Heart right ventricle (tissue), 16 donors: ENCODE measurements at regions of chr16 and their contacts with region 1.

Region 1: DNA sequence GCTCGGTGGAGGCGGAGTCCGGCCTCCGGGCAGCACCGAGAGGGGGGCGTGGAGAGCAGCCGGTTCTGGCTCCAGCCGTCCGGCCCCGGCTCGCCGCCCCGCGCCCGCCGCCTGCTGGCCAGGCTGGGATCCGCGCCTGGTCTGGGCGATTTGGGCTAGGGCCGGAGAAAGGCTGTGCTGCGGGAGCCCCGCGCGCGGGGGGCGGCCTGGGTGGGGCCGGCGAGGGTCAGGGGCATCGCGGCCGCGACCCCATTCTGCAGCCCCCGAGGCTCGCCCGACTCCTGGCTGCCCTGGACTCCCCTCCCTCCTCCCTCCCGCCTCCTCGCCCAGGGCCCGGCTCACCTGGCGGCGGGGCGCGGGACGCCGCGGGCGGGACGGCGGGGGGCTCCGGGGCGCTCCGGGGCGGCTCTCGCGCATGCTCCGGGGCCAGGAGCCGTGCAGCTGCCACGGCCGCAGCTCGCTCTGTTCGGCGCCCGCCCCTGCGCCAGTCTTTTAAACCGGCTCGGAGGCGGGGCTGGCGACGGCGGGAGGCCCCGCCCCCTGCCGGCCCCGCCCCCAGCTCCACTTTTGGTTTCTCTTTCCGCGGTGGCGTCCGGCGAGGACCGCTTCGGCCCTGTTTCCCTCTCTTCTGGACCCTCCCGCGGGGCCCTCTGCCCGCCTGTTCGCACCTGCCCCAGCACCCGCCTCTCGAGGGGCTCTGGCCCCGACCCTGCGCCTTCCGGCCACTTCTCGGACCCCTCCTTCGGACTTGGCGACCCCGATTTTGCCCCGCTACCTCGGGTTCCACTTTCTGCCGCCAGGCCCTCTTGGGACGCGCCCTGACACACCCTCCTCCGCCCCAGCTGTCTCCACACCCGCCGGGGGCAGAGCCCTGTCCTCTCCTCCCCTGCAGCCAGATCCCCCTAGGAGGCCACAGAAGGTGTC is at the start of gene SOCS1:
- DNase-seq: peak; percentile 84 to 88
- ATAC-seq: peak; percentile 77 to 90 (median 84)
- H3K4me3 ChIP-seq: peak within 1 kb of the TSS; percentile 42 to 93 (median 82)
- H3K27ac ChIP-seq: peak within 1 kb of the TSS; percentile 92 to 100 (median 98)
- H3K4me1 ChIP-seq: peaks cover 15 to 66% (median 34%) of the 10 kb centered on the region in 9 donors
- H3K27me3 ChIP-seq: no peaks in the 10 kb centered on the region
- CTCF ChIP-seq: peak in 8 of 9 donors; percentile 68 to 96 (median 92)
- total RNA-seq, gene SOCS1: 0.60 to 12.2 (median 2.1) TPM

Region 2: DNA sequence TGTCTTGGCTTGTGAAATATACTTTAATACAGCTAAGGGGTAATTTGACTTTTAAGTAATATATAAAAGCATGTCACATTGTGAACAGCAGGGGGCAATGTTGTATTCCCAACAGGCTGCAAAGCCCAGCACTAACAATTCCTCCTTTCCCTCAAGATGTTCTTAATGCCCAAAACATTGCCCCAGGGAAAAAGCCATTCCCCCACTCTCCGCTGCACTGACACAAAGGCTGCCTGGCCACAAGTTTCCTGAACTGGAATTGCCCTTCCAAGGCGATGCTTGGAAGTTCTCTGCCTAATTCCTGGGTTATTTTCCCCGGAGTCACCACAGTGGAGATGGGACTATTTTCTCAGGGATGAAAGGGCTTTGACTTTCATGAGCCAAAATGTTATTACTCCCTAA is 284.4 kb before region 1 on chr16:
- intact Hi-C with region 1: loop called in 9 of 10 experiments (anchors 1 to 5 kb)
- DNase-seq: peak in 1 of 2 donors; percentile 70
- ATAC-seq: peak; percentile 34 to 72 (median 66)
- H3K4me3 ChIP-seq: no peak overlapping the region
- H3K27ac ChIP-seq: no peak overlapping the region
- H3K4me1 ChIP-seq: peaks cover 0 to 31% (median 15%) of the 10 kb centered on the region in 9 donors
- H3K27me3 ChIP-seq: no peaks in the 10 kb centered on the region
- CTCF ChIP-seq: peak; percentile 72 to 87 (median 81)

Region 3: GRCh38 chr16:11105038-11105903 is 150.7 kb before region 1 on chr16:
- intact Hi-C with region 1: loop called in 8 of 10 experiments (anchors 2 to 10 kb)
- DNase-seq: no peak
- ATAC-seq: peak; percentile 19 to 82 (median 42)
- H3K4me3 ChIP-seq: no peak overlapping the region
- H3K27ac ChIP-seq: peak overlapping the region in 5 of 10 donors; percentile 0 to 78 (median 30)
- H3K4me1 ChIP-seq: peaks cover 0 to 64% (median 52%) of the 10 kb centered on the region in 9 donors
- H3K27me3 ChIP-seq: no peaks in the 10 kb centered on the region
- CTCF ChIP-seq: no peak

Region 4: DNA sequence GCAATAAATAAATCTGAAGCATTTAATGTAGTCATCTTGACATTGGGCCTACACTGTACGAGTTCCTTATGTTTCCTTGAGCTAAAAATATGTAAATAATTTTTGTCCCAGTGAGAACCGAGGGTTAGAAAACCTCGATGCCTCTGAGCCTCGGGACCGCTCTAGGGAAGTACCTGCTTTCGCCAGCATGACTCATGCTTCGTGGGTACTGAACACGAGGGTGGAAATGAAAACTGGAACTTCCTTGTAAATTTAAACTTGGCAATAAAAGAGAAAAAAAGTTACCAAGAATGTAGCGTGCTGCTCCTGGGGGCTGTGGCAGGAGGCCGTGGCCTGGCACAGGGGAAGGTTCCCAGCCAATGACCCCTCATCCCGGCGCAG is 74.1 kb before region 1 on chr16:
- intact Hi-C with region 1: no loop called
- DNase-seq: no peak
- ATAC-seq: peak in 1 of 8 donors; percentile 20
- H3K4me3 ChIP-seq: no peak overlapping the region
- H3K27ac ChIP-seq: peak overlapping the region in 1 of 10 donors; percentile 65
- H3K4me1 ChIP-seq: peaks cover 0 to 44% (median 0%) of the 10 kb centered on the region in 9 donors
- H3K27me3 ChIP-seq: no peaks in the 10 kb centered on the region
- CTCF ChIP-seq: no peak

Region 5: GRCh38 chr16:11349599-11350276 is 93.7 kb after region 1 on chr16:
- intact Hi-C with region 1: loop called in 2 of 10 experiments (anchors 2 to 10 kb)
- DNase-seq: peak; percentile 54 to 56
- ATAC-seq: peak in 7 of 8 donors; percentile 37 to 78 (median 59)
- H3K4me3 ChIP-seq: no peak overlapping the region
- H3K27ac ChIP-seq: peak overlapping the region in 4 of 10 donors; percentile 35 to 74 (median 52)
- H3K4me1 ChIP-seq: peaks cover 0 to 55% (median 19%) of the 10 kb centered on the region in 9 donors
- H3K27me3 ChIP-seq: no peaks in the 10 kb centered on the region
- CTCF ChIP-seq: no peak